ENCODE measurements at regions of chr5 and their contacts with region 1.

Region 1: DNA sequence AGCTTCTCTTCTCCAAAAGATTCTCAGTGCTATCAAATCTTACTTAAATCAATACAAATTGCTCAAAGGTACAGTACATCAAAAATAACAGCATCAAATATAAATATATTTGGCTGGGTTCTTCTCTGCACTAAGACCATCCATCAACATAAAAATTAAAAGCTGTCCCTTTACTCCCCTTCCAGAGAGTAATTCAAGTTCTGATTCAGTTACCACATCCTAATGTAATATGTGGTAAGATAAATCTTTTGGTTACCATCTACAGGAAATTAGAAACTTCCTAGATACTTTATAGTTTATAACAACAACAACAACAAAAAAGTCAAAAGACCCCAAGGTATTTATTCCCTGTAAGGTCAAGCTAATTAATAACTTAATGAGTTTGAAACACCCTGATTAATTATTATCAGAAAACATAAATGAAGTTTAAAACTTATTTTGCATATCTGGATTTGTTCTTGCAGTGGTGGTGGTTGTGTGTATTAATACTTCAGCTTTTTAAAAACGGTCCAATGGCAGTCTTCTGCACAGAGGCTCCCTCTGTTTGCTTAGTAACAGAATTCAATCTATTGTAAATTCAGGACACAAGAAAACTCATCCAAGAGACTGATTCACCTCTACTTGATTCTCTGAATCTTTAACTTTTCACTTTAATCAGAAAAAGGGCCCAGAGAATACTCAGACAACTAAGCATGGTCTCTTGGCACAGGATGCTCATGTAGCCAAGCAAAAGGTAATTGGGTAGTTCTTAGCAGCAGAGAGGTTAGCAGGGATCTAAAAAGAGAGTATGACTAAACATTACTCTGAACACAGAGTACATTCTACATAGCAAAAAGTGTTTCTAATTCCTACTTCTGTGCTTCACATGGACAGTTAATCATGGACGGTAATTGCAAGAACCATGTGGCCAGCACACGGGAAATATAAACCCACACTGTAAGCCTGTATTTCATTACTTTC is 20.1 kb downstream of the DIAPH1 start:
- DNase-seq: peak; percentile 57
- ATAC-seq: peak; percentile 53
- H3K4me3 ChIP-seq: no peak overlapping the region
- H3K27ac ChIP-seq: no peak overlapping the region
- H3K4me1 ChIP-seq: peaks cover under 1% of the 10 kb centered on the region; the same call in 1 of the 2 replicates
- H3K27me3 ChIP-seq: no peaks in the 10 kb centered on the region
- CTCF ChIP-seq: no peak
- POLR2A ChIP-seq: no peak
- RAD21 ChIP-seq: no peak

Region 2: GRCh38 chr5:140690941-140691924 is 907.4 kb before region 1 on chr5 and contains the starts of genes HARS1 and HARS2:
- CTCF ChIA-PET with region 1: no interaction called
- POLR2A ChIA-PET with region 1: no interaction called
- dilution Hi-C with region 1: no loop called
- in situ Hi-C with region 1: loop called (anchors 25 kb)
- intact Hi-C with region 1: no loop called
- DNase-seq: peak; percentile 95
- ATAC-seq: peak; percentile 95
- H3K4me3 ChIP-seq: peak within 1 kb of the TSS; percentile 83
- H3K27ac ChIP-seq: peak within 1 kb of the TSS; percentile 92
- H3K4me1 ChIP-seq: peaks cover 2% of the 10 kb centered on the region; the same call in 1 of the 2 replicates
- H3K27me3 ChIP-seq: no peaks in the 10 kb centered on the region
- CTCF ChIP-seq: 0 out of 2 replicates have a peak, but pooled peaks have one; percentile 5
- POLR2A ChIP-seq: peak; percentile 84
- RAD21 ChIP-seq: no peak; the same call in 1 of the 2 replicates
- total RNA-seq, gene HARS1: 134 and 141 TPM in 2 replicates
- total RNA-seq, gene HARS2: 30.1 and 36.9 TPM in 2 replicates

Region 3: GRCh38 chr5:141272906-141273305 is 325.8 kb before region 1 on chr5:
- CTCF ChIA-PET with region 1: no interaction called
- POLR2A ChIA-PET with region 1: no interaction called
- dilution Hi-C with region 1: no loop called
- in situ Hi-C with region 1: no loop called
- intact Hi-C with region 1: no loop called
- DNase-seq: no peak
- ATAC-seq: no peak
- H3K4me3 ChIP-seq: no peak overlapping the region
- H3K27ac ChIP-seq: no peak overlapping the region
- H3K4me1 ChIP-seq: no peaks in the 10 kb centered on the region
- H3K27me3 ChIP-seq: no peaks in the 10 kb centered on the region
- CTCF ChIP-seq: no peak
- POLR2A ChIP-seq: no peak
- RAD21 ChIP-seq: no peak

Region 4: GRCh38 chr5:141618804-141619554 is 20.3 kb after region 1 on chr5 and contains the start of gene DIAPH1:
- CTCF ChIA-PET with region 1: interaction called, 94 read pairs
- POLR2A ChIA-PET with region 1: no interaction called
- dilution Hi-C with region 1: no loop called
- in situ Hi-C with region 1: no loop called
- intact Hi-C with region 1: no loop called
- DNase-seq: peak; percentile 94
- ATAC-seq: peak; percentile 94
- H3K4me3 ChIP-seq: peak within 1 kb of the TSS; percentile 55
- H3K27ac ChIP-seq: peak within 1 kb of the TSS; percentile 41
- H3K4me1 ChIP-seq: 0 out of 2 replicates have a peak, but pooled peaks cover 3% of the 10 kb centered on the region
- H3K27me3 ChIP-seq: no peaks in the 10 kb centered on the region
- CTCF ChIP-seq: peak; percentile 99
- POLR2A ChIP-seq: peak; percentile 70; the same call in 1 of the 2 replicates
- RAD21 ChIP-seq: peak; percentile 85
- total RNA-seq, gene DIAPH1: 12.0 and 15.8 TPM in 2 replicates

Region 5: DNA sequence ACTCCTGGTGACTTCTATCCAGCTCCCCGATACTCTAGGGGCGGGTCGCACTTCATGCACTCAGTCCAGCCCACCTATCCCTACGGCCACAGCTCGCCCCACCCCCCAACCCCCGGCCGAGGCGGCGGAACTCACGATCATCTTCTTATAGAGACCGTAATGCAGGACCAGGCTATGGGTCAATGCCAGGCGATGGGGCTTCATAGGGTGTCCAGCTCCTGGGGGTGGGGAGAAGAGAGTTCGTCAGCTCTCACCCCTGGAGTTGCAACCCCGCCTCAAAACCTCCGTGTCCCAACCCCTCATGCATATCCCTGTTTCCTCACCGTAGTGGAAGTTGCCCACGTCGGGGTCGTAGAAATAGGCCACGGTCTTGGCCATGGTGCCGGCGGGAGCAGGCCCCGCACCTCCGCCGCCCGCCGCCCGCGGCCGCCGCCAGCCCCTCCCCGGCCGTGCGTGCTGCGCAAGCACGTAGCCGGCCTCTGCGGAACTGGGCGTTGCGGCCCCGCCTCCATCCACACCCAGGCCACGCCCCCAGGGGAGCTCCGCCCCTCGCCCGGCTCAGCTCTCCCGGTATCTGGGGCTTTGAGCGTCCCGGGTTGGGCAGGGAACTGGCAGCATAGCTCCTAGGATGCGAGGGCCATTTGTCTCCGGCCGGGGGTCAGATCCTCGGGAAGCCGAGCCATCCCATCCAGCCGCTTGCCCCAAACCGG is 37.9 kb after region 1 on chr5 and contains the starts of genes HDAC3 and RELL2:
- CTCF ChIA-PET with region 1: no interaction called
- POLR2A ChIA-PET with region 1: no interaction called
- dilution Hi-C with region 1: no loop called
- in situ Hi-C with region 1: no loop called
- intact Hi-C with region 1: loop called (anchors 2 kb)
- DNase-seq: peak; percentile 83
- ATAC-seq: peak; percentile 96
- H3K4me3 ChIP-seq: peak within 1 kb of the TSS; percentile 97
- H3K27ac ChIP-seq: peak within 1 kb of the TSS; percentile 89
- H3K4me1 ChIP-seq: peaks cover 12% of the 10 kb centered on the region
- H3K27me3 ChIP-seq: no peaks in the 10 kb centered on the region
- CTCF ChIP-seq: no peak
- POLR2A ChIP-seq: peak; percentile 80
- RAD21 ChIP-seq: no peak
- total RNA-seq, gene HDAC3: 71.7 and 84.2 TPM in 2 replicates
- total RNA-seq, gene RELL2: 2.2 TPM in 2 replicates

Region 6: GRCh38 chr5:141664732-141665461 is 66.2 kb after region 1 on chr5:
- CTCF ChIA-PET with region 1: no interaction called
- POLR2A ChIA-PET with region 1: no interaction called
- dilution Hi-C with region 1: no loop called
- in situ Hi-C with region 1: no loop called
- intact Hi-C with region 1: loop called (anchors 2 kb)
- DNase-seq: peak; percentile 58
- ATAC-seq: peak; percentile 93
- H3K4me3 ChIP-seq: no peak overlapping the region
- H3K27ac ChIP-seq: no peak overlapping the region
- H3K4me1 ChIP-seq: no peaks in the 10 kb centered on the region
- H3K27me3 ChIP-seq: no peaks in the 10 kb centered on the region
- CTCF ChIP-seq: peak; percentile 88
- POLR2A ChIP-seq: no peak
- RAD21 ChIP-seq: peak; percentile 83

Measured in IMR-90 (cell line).